Sigmoid colon (tissue), 7 donors: ENCODE measurements at regions of chr1 and their contacts with region 1.

Region 1: DNA sequence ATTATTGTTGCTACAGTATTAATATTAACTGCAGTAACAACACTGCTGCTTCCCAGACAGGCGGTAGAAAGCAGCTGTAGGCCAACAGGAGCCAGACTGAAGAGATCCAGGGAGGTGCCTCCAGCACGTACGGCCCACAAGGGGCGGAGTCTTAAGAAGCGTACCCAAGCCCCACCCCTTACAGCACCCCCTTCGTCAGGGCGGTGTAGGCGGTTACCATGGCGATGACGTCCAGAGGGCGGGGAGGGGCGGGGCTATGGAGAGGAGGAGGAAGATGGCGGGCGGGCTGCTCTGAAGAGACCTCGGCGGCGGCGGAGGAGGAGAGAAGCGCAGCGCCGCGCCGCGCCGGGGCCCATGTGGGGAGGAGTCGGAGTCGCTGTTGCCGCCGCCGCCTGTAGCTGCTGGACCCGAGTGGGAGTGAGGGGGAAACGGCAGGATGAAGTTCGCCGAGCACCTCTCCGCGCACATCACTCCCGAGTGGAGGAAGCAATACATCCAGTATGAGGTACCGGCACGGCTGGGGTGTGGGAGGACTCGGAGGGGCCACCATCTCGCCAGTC is at the start of gene XPR1:
- DNase-seq: peak; percentile 99
- H3K4me3 ChIP-seq: peak within 1 kb of the TSS; percentile 79 to 98 (median 89)
- H3K27ac ChIP-seq: peak within 1 kb of the TSS; percentile 94 to 98 (median 96)
- H3K4me1 ChIP-seq: peaks cover 0 to 39% (median 24%) of the 10 kb centered on the region in 4 donors
- H3K27me3 ChIP-seq: no peaks in the 10 kb centered on the region
- CTCF ChIP-seq: peak in 3 of 4 experiments; percentile 16 to 39 (median 31)
- EP300 ChIP-seq: no peak
- POLR2A ChIP-seq: peak; percentile 88 to 89
- total RNA-seq, gene XPR1: 11.1 to 18.8 (median 14.9) TPM

Region 2: DNA sequence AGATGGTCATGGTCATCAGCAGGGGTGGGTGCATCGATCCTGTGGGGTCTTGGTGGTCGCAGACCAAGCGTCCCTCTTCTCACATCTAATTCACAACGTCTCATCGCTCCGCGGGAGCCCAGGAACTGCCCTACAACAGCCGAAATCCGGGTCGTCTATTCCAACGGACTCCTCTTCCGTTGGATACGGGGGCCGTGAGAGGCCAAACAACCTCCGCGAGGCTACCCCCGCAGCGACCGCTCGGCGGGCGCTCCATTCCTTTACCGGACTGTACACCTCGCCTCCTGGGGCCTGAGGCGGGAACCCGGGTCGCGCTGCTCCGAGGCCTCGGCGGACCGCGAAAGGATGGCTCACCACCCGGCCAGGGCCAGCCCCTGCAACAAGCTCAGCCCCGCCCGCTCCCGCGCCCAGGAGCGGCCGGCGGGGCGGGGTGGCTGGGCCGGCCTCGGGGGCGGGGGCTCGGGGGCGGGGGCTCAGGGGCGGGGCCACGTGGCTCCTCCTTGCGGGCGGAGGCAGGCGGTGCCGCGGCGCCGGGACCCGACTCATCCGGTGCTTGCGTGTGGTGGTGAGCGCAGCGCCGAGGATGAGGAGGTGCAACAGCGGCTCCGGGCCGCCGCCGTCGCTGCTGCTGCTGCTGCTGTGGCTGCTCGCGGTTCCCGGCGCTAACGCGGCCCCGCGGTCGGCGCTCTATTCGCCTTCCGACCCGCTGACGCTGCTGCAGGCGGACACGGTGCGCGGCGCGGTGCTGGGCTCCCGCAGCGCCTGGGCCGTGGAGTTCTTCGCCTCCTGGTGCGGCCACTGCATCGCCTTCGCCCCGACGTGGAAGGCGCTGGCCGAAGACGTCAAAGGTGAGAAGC is 477.3 kb before region 1 on chr1 and contains the start of gene QSOX1:
- intact Hi-C with region 1: loop called (anchors 10 kb)
- DNase-seq: peak; percentile 96
- H3K4me3 ChIP-seq: peak within 1 kb of the TSS; percentile 71 to 92 (median 84)
- H3K27ac ChIP-seq: peak within 1 kb of the TSS; percentile 92 to 95 (median 94)
- H3K4me1 ChIP-seq: peaks cover 0 to 21% (median 17%) of the 10 kb centered on the region in 4 donors
- H3K27me3 ChIP-seq: no peaks in the 10 kb centered on the region
- CTCF ChIP-seq: peak in 1 of 4 experiments; percentile 27
- EP300 ChIP-seq: peak in 1 of 4 donors; percentile 27
- POLR2A ChIP-seq: peak; percentile 52 to 56
- total RNA-seq, gene QSOX1: 64.5 to 102 (median 78.9) TPM

Region 3: DNA sequence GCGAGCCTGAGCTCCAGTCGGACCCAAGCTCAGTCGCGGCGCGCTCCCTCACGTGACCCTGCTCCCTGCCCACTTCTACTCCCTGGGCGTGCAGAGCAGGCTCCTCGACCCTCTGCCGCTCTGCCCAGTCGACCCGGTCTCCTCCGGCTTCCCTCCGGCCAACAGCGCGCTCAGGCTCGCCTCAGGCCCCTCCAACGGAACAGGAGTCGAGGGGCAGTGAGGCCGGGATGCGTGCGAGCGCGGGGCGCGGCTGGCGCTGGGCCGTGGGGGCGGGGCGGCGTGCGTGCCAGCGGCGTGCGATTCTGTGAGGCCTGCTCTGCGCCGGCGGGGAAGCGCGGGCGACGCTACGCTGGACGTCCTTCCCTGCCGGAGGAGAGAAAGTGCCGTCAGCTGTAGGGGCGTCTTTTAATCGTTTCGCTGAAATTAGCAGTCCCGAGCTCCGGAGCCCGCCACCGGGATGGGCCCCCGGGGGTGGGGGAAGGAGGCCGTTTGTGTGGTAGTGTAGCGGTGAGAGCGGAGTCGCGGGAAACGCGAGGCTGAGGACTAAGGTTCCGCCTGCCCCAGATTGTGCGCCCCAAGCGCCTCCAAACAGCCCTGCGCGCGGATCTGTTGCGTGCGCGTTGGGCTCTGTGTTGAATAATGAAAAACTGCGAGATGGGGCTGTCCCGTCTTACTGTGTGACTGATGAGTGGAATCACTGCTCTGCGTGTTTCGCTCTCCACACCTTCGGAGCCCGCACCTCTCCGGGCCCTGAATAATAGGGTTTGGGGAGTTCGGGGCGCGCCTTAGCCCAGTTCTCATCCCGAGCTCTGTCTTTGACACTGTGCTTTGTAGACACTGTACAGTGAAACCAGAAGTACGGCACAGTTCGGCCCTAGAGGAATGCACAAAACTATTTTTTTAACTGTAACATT is 129.2 kb before region 1 on chr1 and contains the start of gene ACBD6:
- intact Hi-C with region 1: loop called (anchors 10 kb)
- DNase-seq: peak; percentile 92
- H3K4me3 ChIP-seq: peak within 1 kb of the TSS; percentile 74 to 93 (median 84)
- H3K27ac ChIP-seq: peak within 1 kb of the TSS; percentile 86 to 96 (median 90)
- H3K4me1 ChIP-seq: peaks cover 0 to 24% (median 15%) of the 10 kb centered on the region in 4 donors
- H3K27me3 ChIP-seq: no peaks in the 10 kb centered on the region
- CTCF ChIP-seq: no peak
- EP300 ChIP-seq: peak in 1 of 4 donors; percentile 13
- POLR2A ChIP-seq: peak in 1 of 2 donors; percentile 38
- total RNA-seq, gene ACBD6: 35.5 to 40.8 (median 40.1) TPM

Region 4: DNA sequence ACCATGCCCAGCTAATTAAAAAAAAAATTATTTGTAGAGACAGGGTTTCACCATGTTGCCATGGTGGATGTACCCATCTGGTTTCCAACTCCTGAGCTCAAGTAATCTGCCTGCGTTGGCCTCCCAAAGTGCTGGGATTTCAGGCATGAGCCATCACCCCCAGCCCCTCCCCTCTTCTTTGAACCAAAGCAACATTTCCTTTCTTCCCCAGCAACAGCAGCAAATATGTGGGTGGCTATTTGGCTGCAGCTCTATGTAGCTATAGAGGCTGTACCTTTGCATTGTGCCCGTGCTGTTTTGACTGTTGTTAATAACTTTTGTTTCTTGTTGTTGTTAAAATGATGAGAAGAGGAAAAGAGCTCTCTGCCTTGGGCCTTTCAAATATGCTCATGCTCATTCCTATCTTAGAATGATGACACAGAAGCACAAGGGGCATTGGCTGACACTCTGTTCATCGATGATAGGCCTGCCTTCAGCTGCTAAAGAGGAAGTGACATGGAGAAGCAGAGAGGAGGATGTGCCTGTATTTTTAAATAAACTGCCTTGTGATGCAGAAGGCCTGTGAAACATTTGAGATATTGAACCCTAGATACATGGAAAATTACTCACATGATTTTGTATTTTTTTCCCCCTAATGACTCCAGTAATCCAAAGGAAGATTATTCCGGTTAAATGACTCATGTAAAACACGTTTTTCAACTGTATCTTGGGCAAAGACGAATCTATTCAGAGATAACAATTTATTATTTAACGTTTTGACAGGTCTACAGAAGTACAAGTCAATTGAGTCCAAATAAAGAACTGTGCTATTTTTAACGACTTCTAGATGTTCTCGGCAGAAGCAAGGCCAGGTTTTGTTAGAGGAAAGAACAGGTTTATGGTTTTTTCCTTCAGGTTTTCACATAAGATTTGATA is 20.6 kb before region 1 on chr1:
- intact Hi-C with region 1: no loop called
- DNase-seq: no peak
- H3K4me3 ChIP-seq: no peak overlapping the region
- H3K27ac ChIP-seq: peak overlapping the region in 3 of 4 donors; percentile 36 to 51 (median 37)
- H3K4me1 ChIP-seq: peaks cover 0 to 26% (median 9%) of the 10 kb centered on the region in 4 donors
- H3K27me3 ChIP-seq: no peaks in the 10 kb centered on the region
- CTCF ChIP-seq: no peak
- EP300 ChIP-seq: no peak
- POLR2A ChIP-seq: no peak

Region 5: DNA sequence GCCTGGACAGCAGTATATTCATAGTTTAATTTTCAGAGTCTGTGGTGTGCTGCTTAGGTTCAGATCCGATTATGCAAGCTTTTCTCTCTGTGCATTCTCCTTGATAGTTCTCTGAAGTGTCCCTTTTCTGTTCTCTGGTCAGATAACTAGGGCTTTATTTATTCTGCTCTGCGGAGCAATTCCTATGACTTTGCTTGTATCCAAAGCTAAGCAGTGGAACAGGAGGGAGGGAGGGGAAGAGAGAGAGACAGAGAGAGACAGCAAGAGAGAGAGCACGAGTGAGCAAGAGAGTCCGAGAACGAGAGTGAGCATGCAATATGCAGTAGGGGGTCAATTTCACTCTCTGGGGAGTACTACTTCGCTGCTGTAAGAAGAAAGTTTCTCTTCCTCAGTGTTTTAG is 113.3 kb after region 1 on chr1:
- intact Hi-C with region 1: no loop called
- DNase-seq: no peak
- H3K4me3 ChIP-seq: no peak overlapping the region
- H3K27ac ChIP-seq: no peak overlapping the region
- H3K4me1 ChIP-seq: no peaks in the 10 kb centered on the region
- H3K27me3 ChIP-seq: no peaks in the 10 kb centered on the region
- CTCF ChIP-seq: no peak
- EP300 ChIP-seq: no peak
- POLR2A ChIP-seq: no peak

Region 6: GRCh38 chr1:180863158-180863775 is 231.4 kb after region 1 on chr1:
- intact Hi-C with region 1: loop called (anchors 5 kb)
- DNase-seq: no peak
- H3K4me3 ChIP-seq: no peak overlapping the region
- H3K27ac ChIP-seq: no peak overlapping the region
- H3K4me1 ChIP-seq: no peaks in the 10 kb centered on the region
- H3K27me3 ChIP-seq: no peaks in the 10 kb centered on the region
- CTCF ChIP-seq: peak; percentile 59 to 70 (median 64)
- EP300 ChIP-seq: no peak
- POLR2A ChIP-seq: no peak

Region 7: GRCh38 chr1:181021811-181022434 is 390.1 kb after region 1 on chr1:
- intact Hi-C with region 1: loop called (anchors 10 kb)
- DNase-seq: peak; percentile 82
- H3K4me3 ChIP-seq: peak overlapping the region; percentile 89 to 99 (median 98)
- H3K27ac ChIP-seq: peak overlapping the region; percentile 90 to 97 (median 96)
- H3K4me1 ChIP-seq: peaks cover 5 to 20% (median 18%) of the 10 kb centered on the region in 4 donors
- H3K27me3 ChIP-seq: no peaks in the 10 kb centered on the region
- CTCF ChIP-seq: no peak
- EP300 ChIP-seq: no peak
- POLR2A ChIP-seq: no peak

Region 8: DNA sequence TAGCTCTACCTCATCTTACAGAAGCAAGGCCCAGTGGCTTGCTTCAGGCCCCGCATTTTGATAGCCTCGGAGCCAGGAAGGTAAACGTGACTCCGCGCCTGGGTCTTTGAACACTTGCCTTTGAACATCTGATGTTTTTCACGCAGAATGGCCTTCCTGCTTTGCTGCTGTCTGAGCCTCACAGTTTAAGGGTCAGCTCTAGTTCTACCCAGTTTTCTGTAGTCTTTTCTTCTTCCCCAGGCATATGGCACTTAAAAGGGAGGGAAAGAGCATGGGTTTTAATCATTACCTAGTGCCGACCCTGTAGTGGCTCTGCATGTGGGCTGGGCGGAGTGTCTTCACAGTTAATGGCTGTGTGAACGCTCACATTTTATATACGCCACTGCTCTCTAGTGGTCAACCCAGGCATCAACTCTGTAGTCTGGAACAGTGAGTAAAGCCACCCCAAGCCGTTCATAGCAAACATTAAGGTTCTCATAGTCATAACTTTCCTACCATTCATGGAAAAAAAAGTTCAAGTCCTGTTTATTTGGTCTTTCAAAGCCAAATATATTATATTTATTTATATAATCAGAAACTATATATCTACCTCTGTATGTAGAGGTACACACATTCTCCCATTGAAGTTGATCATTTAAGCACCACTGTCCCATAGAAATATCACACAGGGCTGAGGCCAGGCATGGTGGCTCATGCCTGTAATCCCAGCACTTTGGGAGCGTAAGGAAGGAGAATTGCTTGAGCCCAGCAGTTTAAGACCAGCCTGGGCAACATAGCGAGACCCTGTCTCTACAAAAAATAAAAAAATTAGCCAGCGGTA is 534.7 kb after region 1 on chr1:
- intact Hi-C with region 1: loop called (anchors 5 kb)
- DNase-seq: peak; percentile 79
- H3K4me3 ChIP-seq: no peak overlapping the region
- H3K27ac ChIP-seq: no peak overlapping the region
- H3K4me1 ChIP-seq: peaks cover 0 to 6% (median 4%) of the 10 kb centered on the region in 4 donors
- H3K27me3 ChIP-seq: no peaks in the 10 kb centered on the region
- CTCF ChIP-seq: peak; percentile 63 to 84 (median 74)
- EP300 ChIP-seq: no peak
- POLR2A ChIP-seq: no peak